Activated naive CD4-positive, alpha-beta T cell treated with anti-CD3 and anti-CD28 coated beads for 36 hours (primary cell): ENCODE measurements at regions of chr15 and their contacts with region 1.

Region 1: GRCh38 chr15:73697033-73697467 is 12.9 kb downstream of the CD276 start:
- DNase-seq: peak; percentile 95
- H3K4me3 Mint-ChIP-seq: peak overlapping the region; percentile 9
- H3K27ac Mint-ChIP-seq: peak overlapping the region; percentile 35
- H3K4me1 Mint-ChIP-seq: peaks cover 24% of the 10 kb centered on the region
- H3K27me3 Mint-ChIP-seq: peaks cover 60% of the 10 kb centered on the region

Region 2: GRCh38 chr15:73142802-73143762 is 554.0 kb before region 1 on chr15:
- CTCF ChIA-PET with region 1: no interaction called
- intact Hi-C with region 1: loop called (anchors 2 kb)
- DNase-seq: peak; percentile 10
- H3K4me3 Mint-ChIP-seq: no peak overlapping the region
- H3K27ac Mint-ChIP-seq: peak overlapping the region; percentile 63
- H3K4me1 Mint-ChIP-seq: peaks cover 29% of the 10 kb centered on the region
- H3K27me3 Mint-ChIP-seq: no peaks in the 10 kb centered on the region

Region 3: DNA sequence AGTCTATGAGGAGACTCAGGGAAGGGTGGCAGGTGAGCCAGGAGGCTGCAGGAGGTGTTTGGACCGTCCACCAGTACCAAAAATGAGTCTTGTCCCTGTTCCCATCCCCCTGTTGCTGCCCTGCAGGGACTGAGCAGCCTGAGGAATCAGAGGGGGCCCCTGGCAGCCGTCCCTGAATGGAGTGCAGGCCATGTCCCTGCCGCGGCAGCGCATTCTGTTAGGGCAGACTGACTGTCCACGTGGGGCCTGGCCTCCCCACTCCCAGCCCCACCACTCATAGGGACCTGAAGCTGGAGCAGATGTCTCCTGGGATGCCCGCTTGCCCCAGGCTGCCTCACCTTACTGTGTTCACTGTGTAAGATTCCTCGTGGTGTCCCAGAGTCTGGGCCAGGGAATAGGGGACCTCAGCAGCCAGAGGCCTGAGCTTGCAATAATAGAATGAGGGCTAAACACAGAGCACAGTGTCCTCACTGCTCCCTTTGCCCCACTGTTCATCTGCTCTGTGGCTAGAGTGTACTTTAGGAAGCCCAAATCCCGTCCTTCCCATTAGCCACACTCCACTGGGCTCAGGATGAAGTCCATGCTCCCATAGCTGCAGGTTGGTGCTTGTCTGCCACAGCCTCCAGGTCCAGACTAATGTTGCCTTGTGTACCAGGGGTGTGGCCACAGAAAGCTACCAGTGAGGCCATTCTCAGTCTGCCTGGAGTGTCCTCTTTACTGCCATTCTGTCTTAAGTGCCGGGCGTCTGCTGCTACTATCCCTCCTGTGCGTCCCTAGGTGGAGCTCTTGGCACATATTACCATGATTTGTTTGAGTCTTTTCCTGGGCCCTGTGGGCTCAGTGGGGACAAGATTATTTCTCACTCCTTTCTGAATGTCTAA is 391.5 kb before region 1 on chr15:
- CTCF ChIA-PET with region 1: interaction called, 5 read pairs
- intact Hi-C with region 1: loop called (anchors 2 kb)
- DNase-seq: peak; percentile 36
- H3K4me3 Mint-ChIP-seq: no peak overlapping the region
- H3K27ac Mint-ChIP-seq: no peak overlapping the region
- H3K4me1 Mint-ChIP-seq: peaks cover 4% of the 10 kb centered on the region
- H3K27me3 Mint-ChIP-seq: no peaks in the 10 kb centered on the region

Region 4: DNA sequence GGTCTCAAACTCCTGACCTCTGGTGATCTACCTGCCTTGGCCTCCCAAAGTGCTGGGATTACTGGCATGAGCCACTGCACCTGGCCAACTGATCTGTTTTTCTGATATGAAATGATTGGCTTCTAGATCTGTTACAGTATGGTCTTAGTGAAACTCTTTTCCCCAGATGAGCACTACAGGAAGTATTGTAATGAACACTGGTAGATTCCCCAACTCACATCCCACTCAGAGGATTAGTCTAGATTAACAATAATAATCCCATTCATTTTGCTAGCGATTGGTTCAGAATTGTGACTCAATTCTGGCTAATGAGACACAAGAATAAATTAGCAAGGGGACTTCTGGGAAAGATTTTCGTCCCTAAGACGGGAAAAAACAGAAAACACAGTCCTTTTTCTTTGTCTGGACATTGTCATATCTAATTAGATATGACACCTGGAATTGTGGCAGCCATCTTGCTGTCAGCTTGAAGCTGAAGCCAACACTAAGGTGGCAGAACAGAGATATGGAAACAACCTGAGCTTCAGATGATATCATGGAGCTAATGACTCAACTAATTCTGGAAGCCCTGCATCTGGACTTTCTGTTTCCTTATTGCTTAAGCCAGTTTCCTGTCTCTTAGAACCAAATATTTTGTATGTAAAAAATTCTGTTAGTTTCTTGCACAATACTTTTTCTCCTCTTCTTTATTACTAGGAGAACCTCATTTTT is 46.5 kb before region 1 on chr15:
- CTCF ChIA-PET with region 1: interaction called, 17 read pairs
- intact Hi-C with region 1: loop called (anchors 1 kb)
- DNase-seq: peak; percentile 48
- H3K4me3 Mint-ChIP-seq: no peak overlapping the region
- H3K27ac Mint-ChIP-seq: peak overlapping the region; percentile 60
- H3K4me1 Mint-ChIP-seq: peaks cover 28% of the 10 kb centered on the region
- H3K27me3 Mint-ChIP-seq: peaks cover 15% of the 10 kb centered on the region

Region 5: DNA sequence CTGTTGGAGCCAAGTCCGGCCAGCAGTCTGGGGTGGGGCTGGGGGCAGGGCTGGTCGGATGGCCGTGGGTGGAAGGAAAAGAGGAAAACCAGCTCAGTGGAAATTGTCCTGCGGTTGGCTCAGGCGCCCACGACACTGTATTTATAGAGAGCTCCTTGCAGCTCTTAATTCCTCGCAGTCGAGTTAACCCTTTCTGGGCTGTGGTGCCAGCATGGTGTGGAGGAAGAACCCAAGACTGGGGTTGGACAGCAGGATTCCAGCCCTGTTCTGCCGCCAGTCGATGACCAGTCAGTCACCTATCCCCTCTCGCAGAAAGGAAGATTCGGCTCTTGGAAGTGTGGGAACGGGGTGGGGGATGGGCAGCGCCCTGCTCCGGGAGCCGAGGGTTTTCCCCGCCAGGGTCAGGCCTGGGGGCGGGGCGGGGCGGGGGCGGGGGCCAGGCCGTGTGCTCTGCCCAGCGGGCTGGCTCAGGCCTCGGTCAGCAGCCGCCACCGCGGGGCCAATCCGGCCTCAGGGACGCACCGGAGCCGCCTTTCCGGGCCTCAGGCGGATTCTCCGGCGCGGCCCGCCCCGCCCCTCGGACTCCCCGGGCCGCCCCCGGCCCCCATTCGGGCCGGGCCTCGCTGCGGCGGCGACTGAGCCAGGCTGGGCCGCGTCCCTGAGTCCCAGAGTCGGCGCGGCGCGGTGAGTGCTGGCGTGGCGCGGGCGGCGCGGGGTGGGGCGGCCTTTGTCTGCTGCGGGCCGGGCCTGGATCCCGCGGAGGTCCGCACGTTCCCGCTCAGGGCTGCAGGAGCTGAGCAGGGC is 13.1 kb before region 1 on chr15 and contains the start of gene CD276:
- CTCF ChIA-PET with region 1: interaction called, 113 read pairs
- intact Hi-C with region 1: loop called (anchors 1 kb)
- DNase-seq: no peak
- H3K4me3 Mint-ChIP-seq: peak within 1 kb of the TSS; percentile 66
- H3K27ac Mint-ChIP-seq: no peak within 1 kb of the TSS
- H3K4me1 Mint-ChIP-seq: peaks cover 18% of the 10 kb centered on the region
- H3K27me3 Mint-ChIP-seq: peaks cover 44% of the 10 kb centered on the region
- total RNA-seq, gene CD276: 1.2 to 1.3 TPM